Motor neuron (in vitro differentiated cells): ENCODE measurements at regions of chr14 and their contacts with region 1.

Region 1: DNA sequence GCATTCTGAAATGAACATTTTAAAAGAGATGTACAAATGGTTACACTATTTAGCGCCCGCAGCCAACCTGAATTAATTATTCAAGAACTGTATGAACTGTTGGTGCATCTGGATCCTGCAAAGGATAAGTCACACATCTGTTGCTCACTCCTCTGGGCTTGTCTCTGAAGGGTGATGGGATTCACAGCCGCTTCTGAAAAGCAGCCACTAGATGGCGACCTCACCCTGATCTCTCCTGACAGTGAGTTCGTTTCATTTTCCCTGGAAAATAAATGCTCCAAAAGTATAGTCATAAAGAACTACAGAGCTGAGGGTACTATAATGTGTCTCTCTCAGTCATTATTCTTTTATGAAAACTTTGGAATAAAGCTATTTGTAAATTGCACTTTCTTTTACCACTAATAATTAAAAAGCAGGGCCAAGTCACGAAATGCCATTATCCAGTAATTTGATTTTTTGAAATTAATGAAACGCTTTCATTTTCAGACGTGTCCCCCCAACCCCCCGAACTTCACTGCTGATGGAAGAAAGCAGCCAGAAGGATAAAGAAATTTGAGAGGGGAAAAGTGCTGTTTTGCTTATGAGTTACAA is 789.6 kb downstream of the NRXN3 start:
- ATAC-seq: peak; percentile 59 to 99 (median 72)
- H3K4me3 ChIP-seq: no peak overlapping the region
- H3K27ac ChIP-seq: no peak overlapping the region
- H3K4me1 ChIP-seq: no peaks in the 10 kb centered on the region

Region 2: GRCh38 chr14:79552778-79553177 is 593.0 kb after region 1 on chr14:
- in situ Hi-C with region 1: loop called in 1 of 9 experiments (anchors 25 kb)
- ATAC-seq: no peak
- H3K4me3 ChIP-seq: no peak overlapping the region
- H3K27ac ChIP-seq: no peak overlapping the region
- H3K4me1 ChIP-seq: peaks cover 3 to 6% of the 10 kb centered on the region in 2 donors

Region 3: DNA sequence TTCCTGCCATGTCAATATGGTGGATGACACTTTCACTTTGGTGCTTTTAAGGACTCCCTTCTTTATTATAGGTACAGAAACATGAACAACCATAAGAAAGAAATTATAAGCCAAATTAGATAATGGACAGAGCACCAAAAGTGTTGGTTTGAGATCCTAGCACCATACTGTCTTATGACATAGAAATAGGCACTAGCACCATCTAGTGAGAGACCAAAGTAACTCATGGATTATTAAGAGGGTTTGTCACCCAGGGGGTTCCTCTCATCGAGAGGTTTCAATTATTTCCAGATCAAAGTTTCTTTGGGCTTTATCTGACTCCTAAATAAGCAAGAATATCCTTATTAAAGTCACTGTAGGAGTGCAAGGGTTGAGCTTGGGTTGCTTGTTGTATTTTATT is 1404.5 kb after region 1 on chr14:
- in situ Hi-C with region 1: loop called in 1 of 9 experiments (anchors 25 kb)
- ATAC-seq: peak in 3 of 8 experiments; percentile 68 to 74 (median 71)
- H3K4me3 ChIP-seq: no peak overlapping the region
- H3K27ac ChIP-seq: no peak overlapping the region
- H3K4me1 ChIP-seq: no peaks in the 10 kb centered on the region

Region 4: DNA sequence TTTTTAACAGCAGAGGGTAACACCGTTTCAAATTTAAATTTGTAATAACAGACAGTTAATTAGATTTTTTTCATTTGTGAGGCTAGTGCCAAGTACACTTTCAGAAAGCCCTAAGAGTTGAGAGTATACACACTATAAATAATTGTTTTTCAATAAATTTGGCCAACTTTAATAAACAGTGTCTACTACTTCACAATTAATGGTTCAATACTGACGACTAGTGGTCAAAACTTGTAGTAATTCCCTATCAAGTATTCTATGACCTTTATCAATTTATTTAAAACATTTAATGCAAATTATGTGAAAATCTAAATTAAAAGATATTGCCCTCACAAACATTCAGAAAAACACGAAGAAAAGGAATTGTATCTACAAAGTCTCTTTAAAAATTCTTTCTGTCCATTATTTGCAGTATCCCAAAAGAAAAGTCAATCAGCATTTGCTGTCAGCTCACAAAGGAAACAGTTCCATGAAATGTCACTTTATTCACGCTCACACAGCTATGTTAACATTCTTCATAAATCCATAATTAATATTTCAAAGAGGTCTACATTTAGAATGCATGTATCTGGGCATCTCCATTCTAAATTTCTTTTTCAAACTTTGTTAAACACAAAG is 1890.5 kb after region 1 on chr14:
- in situ Hi-C with region 1: loop called in 3 of 9 experiments (anchors 25 kb)
- ATAC-seq: peak in 4 of 8 experiments; percentile 43 to 70 (median 66)
- H3K4me3 ChIP-seq: no peak overlapping the region
- H3K27ac ChIP-seq: no peak overlapping the region
- H3K4me1 ChIP-seq: peaks cover 0 to 4% of the 10 kb centered on the region in 2 donors